PC-3 (cell line): ENCODE measurements at regions of chr13 and their contacts with region 1.

Region 1: DNA sequence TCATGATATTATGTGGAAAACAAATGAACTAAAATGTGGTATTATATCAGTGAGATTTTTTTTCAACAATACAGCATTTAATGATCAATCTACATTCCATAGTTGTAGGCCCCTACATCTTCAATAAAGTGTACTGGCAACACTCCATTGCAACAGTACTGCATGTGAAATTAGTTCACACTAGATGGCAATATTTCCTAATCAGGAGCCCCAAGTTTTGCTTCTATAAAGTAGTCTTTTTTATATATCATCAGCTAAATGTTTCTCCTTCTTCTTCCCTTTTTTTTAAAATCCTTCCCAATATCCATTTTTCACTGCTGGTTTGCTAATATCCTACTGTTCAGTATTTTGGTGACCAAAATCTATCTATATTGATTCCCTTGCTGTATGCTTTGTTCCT is 528.3 kb upstream of the ATXN8OS start:
- DNase-seq: peak; percentile 7
- ATAC-seq: peak; percentile 42; the same call in 1 of the 2 replicates
- H3K4me3 ChIP-seq: no peak overlapping the region
- H3K27ac ChIP-seq: no peak overlapping the region
- H3K4me1 ChIP-seq: no peaks in the 10 kb centered on the region
- H3K27me3 ChIP-seq: no peaks in the 10 kb centered on the region
- CTCF ChIP-seq: peak; percentile 41

Region 2: DNA sequence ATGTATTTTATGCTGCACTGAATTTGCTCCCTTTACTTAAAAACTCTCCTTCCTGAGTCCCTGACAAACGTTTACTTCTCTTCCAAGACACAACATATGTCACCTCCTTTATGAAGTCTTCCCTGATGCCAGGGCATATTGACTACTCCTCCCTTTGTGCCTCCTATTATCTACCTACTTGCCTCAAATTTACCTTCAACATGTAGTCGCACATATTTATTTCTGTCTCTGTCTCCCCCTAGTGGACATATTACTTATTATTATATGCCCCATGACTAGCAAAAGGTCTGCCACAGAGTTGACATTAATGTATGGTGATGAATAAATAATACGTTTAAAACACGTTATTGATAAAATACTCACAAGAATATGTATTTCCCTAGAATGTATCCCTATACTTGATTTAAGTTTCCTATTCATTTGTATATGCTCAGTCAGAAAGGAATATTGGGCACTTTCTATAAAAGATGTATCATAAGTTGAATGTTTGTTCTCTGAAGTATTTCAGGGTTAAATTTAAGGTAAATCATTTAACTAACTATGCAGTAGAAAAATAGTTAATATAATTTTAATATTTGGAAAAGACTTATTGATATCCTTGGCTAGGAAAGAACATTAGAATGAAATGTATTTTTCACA is 278.0 kb after region 1 on chr13:
- CTCF ChIA-PET with region 1: no interaction called
- POLR2A ChIA-PET with region 1: no interaction called
- intact Hi-C with region 1: loop called (anchors 1 kb)
- DNase-seq: peak; percentile 66
- ATAC-seq: peak; percentile 65
- H3K4me3 ChIP-seq: no peak overlapping the region
- H3K27ac ChIP-seq: no peak overlapping the region
- H3K4me1 ChIP-seq: no peaks in the 10 kb centered on the region
- H3K27me3 ChIP-seq: no peaks in the 10 kb centered on the region
- CTCF ChIP-seq: peak; percentile 67